Dendritic cell treated with granulocyte-macrophage colony-stimulating factor and Interleukin-4, amounts not matched to agents 40 ng/mL and 50 ng/mL, for 4 days (primary cell): ENCODE measurements at regions of chr17 and their contacts with region 1.

Region 1: DNA sequence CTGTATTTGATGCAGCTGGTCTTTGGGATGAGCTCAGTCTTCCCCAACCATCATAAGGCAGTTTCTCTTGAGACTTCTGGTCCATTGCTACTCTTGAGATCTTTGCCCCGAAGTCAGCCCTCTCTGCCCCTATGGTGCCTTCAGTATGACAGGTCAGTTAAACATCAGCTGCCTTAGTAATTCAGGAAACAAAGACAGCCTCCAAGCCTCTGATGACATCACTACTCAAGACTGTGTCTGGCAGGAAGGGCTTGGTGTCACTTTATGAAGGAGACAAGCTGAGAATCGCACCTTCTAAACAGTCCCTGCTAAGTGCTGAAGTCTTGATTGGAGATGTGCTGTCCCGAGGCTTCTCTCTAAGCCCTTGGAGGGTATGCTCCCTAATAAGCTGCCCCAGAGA is 104.9 kb upstream of the TBX2 start:
- H3K4me3 Mint-ChIP-seq: no peak overlapping the region
- H3K27ac Mint-ChIP-seq: no peak overlapping the region
- H3K4me1 Mint-ChIP-seq: no peaks in the 10 kb centered on the region
- H3K27me3 Mint-ChIP-seq: no peaks in the 10 kb centered on the region

Region 2: GRCh38 chr17:61208301-61209105 is 86.3 kb before region 1 on chr17:
- intact Hi-C with region 1: loop called (anchors 10 kb)
- H3K4me3 Mint-ChIP-seq: no peak overlapping the region
- H3K27ac Mint-ChIP-seq: no peak overlapping the region
- H3K4me1 Mint-ChIP-seq: no peaks in the 10 kb centered on the region
- H3K27me3 Mint-ChIP-seq: no peaks in the 10 kb centered on the region